Pancreas (tissue), 10 donors: ENCODE measurements at regions of chr2 and their contacts with region 1.

Region 1: DNA sequence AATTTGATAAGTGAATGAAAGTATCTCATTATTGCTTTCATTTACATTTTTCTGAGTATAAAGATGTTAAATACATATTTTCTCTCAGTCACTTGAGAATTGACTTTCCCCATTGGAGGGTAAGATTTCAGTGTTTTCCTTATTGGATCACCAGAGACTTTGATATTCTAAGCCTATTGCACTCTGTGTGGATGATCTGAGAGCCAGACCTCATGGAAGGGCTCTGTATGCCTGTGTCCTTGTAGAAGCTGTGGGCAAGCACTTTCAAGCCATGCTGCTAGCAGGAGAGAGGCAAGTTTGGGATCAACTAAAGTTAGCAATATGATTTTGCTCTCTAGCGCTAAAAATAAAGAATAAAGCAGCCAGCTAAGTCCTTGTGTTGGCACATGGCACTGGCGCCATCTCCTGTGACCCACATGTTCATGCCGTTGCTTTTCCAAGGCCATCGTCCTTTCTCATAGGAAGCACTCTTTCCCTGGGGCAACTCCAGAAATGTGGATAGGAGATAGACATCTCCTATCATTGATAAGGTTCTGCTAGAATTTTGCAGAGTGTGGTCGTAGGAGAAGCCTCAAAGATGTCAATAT is 72.6 kb downstream of the AOX1 start:
- DNase-seq: peak in 2 of 6 donors; percentile 27 to 42
- ATAC-seq: peak; percentile 56 to 77 (median 72)
- H3K4me3 ChIP-seq: no peak overlapping the region
- H3K27ac ChIP-seq: peak overlapping the region in 2 of 4 donors; percentile 34 to 79
- H3K4me1 ChIP-seq: peaks cover 17 to 39% (median 21%) of the 10 kb centered on the region in 3 donors
- H3K27me3 ChIP-seq: no peaks in the 10 kb centered on the region
- CTCF ChIP-seq: no peak

Region 2: GRCh38 chr2:200592406-200593075 is 65.8 kb before region 1 on chr2:
- intact Hi-C with region 1: loop called in 1 of 3 experiments (anchors 10 kb)
- DNase-seq: peak in 4 of 6 donors; percentile 26 to 58 (median 45)
- ATAC-seq: peak; percentile 74 to 85 (median 81)
- H3K4me3 ChIP-seq: peak overlapping the region in 1 of 4 donors; percentile 11
- H3K27ac ChIP-seq: peak overlapping the region in 3 of 4 donors; percentile 18 to 91 (median 89)
- H3K4me1 ChIP-seq: peaks cover 23 to 76% (median 51%) of the 10 kb centered on the region in 3 donors
- H3K27me3 ChIP-seq: no peaks in the 10 kb centered on the region
- CTCF ChIP-seq: no peak